Natural killer cell (primary cell): ENCODE measurements at regions of chr3 and their contacts with region 1.

Region 1: GRCh38 chr3:58532794-58533220 is 4.2 kb downstream of the ACOX2 start:
- DNase-seq: peak; percentile 70 to 89
- ATAC-seq: peak; percentile 93 to 99 (median 99)
- H3K4me3 ChIP-seq: no peak overlapping the region
- H3K4me3 Mint-ChIP-seq: no peak overlapping the region
- H3K27ac ChIP-seq: no peak overlapping the region
- H3K27ac Mint-ChIP-seq: peak overlapping the region in 1 of 2 donors; percentile 75
- H3K4me1 ChIP-seq: peaks cover 9% of the 10 kb centered on the region
- H3K4me1 Mint-ChIP-seq: peaks cover 8 to 10% of the 10 kb centered on the region in 2 donors
- H3K27me3 ChIP-seq: no peaks in the 10 kb centered on the region
- H3K27me3 Mint-ChIP-seq: peaks cover 0 to 6% of the 10 kb centered on the region in 2 donors
- CTCF ChIP-seq: peak; percentile 86

Region 2: GRCh38 chr3:58188173-58188564 is 344.6 kb before region 1 on chr3:
- intact Hi-C with region 1: loop called (anchors 5 kb)
- DNase-seq: no peak
- ATAC-seq: no peak
- H3K4me3 ChIP-seq: no peak overlapping the region
- H3K4me3 Mint-ChIP-seq: no peak overlapping the region
- H3K27ac ChIP-seq: no peak overlapping the region
- H3K27ac Mint-ChIP-seq: no peak overlapping the region
- H3K4me1 ChIP-seq: peaks cover 5% of the 10 kb centered on the region
- H3K4me1 Mint-ChIP-seq: no peaks in the 10 kb centered on the region
- H3K27me3 ChIP-seq: no peaks in the 10 kb centered on the region
- H3K27me3 Mint-ChIP-seq: no peaks in the 10 kb centered on the region
- CTCF ChIP-seq: no peak

Region 3: DNA sequence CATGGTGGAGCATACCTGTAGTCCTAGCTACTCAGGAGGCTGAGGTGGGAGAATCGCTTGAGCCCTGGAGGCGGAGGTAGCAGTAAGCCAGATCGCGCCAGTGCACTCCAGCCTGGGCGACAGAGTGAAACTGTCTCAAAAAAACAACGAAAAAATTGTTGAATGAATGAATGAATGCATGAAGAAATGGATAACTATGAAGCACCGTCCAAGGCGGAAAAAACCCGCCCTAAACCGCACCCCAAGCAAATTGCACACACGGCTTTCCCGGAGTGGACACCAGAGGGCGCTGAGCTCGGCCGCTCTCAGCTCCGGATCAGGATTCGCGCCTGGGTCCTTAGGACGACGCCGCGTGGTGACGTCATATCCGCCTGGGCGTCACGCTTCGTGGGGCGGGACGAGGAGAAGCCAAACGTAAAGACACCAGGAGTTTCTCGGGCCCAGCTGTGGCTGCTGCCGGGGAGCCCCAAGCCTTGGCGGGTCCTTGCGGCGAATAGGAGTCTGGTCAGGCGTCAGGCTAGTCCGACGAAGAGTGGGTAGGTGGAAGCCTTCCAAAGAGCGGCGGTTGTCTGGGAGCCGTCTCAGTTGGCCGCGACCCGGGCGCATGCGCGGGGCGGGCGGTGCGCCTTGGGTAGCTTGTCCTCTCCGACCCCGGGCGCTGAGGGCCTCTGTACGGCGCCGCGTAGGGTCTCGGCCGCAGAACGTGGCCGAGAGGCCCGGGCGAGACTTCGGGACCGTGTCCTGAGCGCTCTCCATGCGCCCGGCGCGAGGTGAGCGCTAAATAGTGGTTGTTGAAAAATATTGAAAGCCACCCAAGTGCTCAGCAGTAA is 226.7 kb before region 1 on chr3 and contains the starts of genes HTD2 and RPP14:
- intact Hi-C with region 1: loop called (anchors 1 kb)
- DNase-seq: peak; percentile 99 to 100
- ATAC-seq: peak; percentile 90 to 97 (median 91)
- H3K4me3 ChIP-seq: peak within 1 kb of the TSS; percentile 79
- H3K4me3 Mint-ChIP-seq: peak within 1 kb of the TSS; percentile 100
- H3K27ac ChIP-seq: peak within 1 kb of the TSS; percentile 95
- H3K27ac Mint-ChIP-seq: peak within 1 kb of the TSS; percentile 99
- H3K4me1 ChIP-seq: peaks cover 24% of the 10 kb centered on the region
- H3K4me1 Mint-ChIP-seq: peaks cover 30 to 32% of the 10 kb centered on the region in 2 donors
- H3K27me3 ChIP-seq: no peaks in the 10 kb centered on the region
- H3K27me3 Mint-ChIP-seq: peaks cover 8 to 17% of the 10 kb centered on the region in 2 donors
- CTCF ChIP-seq: peak; percentile 96
- total RNA-seq, gene HTD2: 3.3 to 5.5 (median 3.7) TPM
- total RNA-seq, gene RPP14: 13.1 to 18.8 (median 17.0) TPM

Region 4: DNA sequence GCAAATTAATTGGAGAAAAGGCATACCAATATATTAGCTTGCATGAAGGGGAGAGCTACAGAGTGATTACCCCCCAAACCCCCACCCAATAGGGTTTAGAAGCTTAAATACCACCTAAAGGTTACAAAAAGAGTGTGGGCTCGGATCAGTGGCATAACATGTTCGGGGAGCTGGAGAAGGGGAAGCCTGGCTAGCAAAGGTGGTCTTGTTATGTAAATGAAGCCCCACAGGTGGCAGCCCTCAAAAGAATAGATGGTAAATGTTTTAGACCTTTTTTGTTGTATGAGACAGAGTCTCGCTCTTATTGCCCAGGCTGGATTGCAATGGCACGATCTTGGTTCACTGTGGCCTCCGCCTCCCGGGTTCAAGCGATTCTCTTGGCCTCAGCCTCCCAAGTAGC is 211.0 kb before region 1 on chr3:
- intact Hi-C with region 1: loop called (anchors 1 kb)
- DNase-seq: no peak
- ATAC-seq: no peak
- H3K4me3 ChIP-seq: no peak overlapping the region
- H3K4me3 Mint-ChIP-seq: no peak overlapping the region
- H3K27ac ChIP-seq: no peak overlapping the region
- H3K27ac Mint-ChIP-seq: no peak overlapping the region
- H3K4me1 ChIP-seq: no peaks in the 10 kb centered on the region
- H3K4me1 Mint-ChIP-seq: no peaks in the 10 kb centered on the region
- H3K27me3 ChIP-seq: no peaks in the 10 kb centered on the region
- H3K27me3 Mint-ChIP-seq: no peaks in the 10 kb centered on the region
- CTCF ChIP-seq: no peak

Region 5: GRCh38 chr3:58433400-58434169 is 99.2 kb before region 1 on chr3 and contains the start of gene PDHB:
- intact Hi-C with region 1: loop called (anchors 1 kb)
- DNase-seq: peak; percentile 83 to 93
- ATAC-seq: peak; percentile 94 to 98 (median 95)
- H3K4me3 ChIP-seq: peak within 1 kb of the TSS; percentile 86
- H3K4me3 Mint-ChIP-seq: peak within 1 kb of the TSS; percentile 90
- H3K27ac ChIP-seq: peak within 1 kb of the TSS; percentile 82
- H3K27ac Mint-ChIP-seq: peak within 1 kb of the TSS; percentile 89 to 96
- H3K4me1 ChIP-seq: peaks cover 12% of the 10 kb centered on the region
- H3K4me1 Mint-ChIP-seq: peaks cover 19 to 22% of the 10 kb centered on the region in 2 donors
- H3K27me3 ChIP-seq: no peaks in the 10 kb centered on the region
- H3K27me3 Mint-ChIP-seq: peaks cover 0 to 7% of the 10 kb centered on the region in 2 donors
- CTCF ChIP-seq: no peak
- total RNA-seq, gene PDHB: 33.7 to 52.4 (median 39.9) TPM

Region 6: DNA sequence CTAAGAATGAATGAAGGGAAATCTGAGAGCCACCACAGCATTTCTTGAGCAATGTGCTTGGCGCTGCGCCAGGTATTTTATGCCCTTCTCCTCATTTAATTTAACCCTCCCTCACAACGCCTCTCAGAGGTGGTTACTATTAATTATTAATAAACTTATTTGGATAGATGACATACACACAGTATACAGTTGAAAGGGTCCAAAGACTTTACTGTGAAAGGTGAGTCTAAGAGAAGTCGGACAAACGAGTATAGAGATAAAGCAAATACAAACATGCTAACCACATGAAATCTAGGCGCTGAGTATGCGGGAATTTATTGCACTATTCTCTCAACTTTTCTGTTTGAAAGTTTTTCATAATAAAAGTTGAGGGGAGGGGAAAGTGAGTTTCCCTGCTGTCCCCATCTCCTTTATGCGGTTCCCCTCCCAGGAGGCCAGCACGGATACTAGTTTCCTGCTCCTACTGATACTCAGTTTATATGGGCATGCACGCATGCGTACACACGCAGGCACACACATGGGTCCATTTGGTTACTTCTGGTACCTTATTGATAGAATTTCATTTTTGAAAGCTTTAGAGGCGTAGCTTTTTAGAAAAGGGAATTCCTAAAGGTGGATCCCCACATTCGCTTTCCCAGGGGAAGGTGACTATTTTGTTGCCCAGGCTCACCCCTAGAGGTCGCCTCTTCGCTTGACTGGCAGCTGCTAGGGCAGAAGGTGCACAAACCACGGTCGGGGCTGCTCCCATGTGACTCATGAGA is 69.4 kb before region 1 on chr3:
- intact Hi-C with region 1: loop called (anchors 1 kb)
- DNase-seq: peak; percentile 63 to 79
- ATAC-seq: peak; percentile 93 to 99 (median 98)
- H3K4me3 ChIP-seq: no peak overlapping the region
- H3K4me3 Mint-ChIP-seq: peak overlapping the region; percentile 35
- H3K27ac ChIP-seq: no peak overlapping the region
- H3K27ac Mint-ChIP-seq: peak overlapping the region in 1 of 2 donors; percentile 36
- H3K4me1 ChIP-seq: peaks cover 12% of the 10 kb centered on the region
- H3K4me1 Mint-ChIP-seq: peaks cover 8 to 12% of the 10 kb centered on the region in 2 donors
- H3K27me3 ChIP-seq: no peaks in the 10 kb centered on the region
- H3K27me3 Mint-ChIP-seq: no peaks in the 10 kb centered on the region
- CTCF ChIP-seq: peak; percentile 94

Region 7: GRCh38 chr3:58491506-58492402 is 41.1 kb before region 1 on chr3 and contains the start of gene KCTD6:
- intact Hi-C with region 1: loop called (anchors 1 kb)
- DNase-seq: peak; percentile 91 to 93
- ATAC-seq: peak; percentile 88 to 97 (median 93)
- H3K4me3 ChIP-seq: peak within 1 kb of the TSS; percentile 72
- H3K4me3 Mint-ChIP-seq: peak within 1 kb of the TSS; percentile 94
- H3K27ac ChIP-seq: peak within 1 kb of the TSS; percentile 54
- H3K27ac Mint-ChIP-seq: peak within 1 kb of the TSS; percentile 68 to 87
- H3K4me1 ChIP-seq: peaks cover 25% of the 10 kb centered on the region
- H3K4me1 Mint-ChIP-seq: peaks cover 45 to 57% of the 10 kb centered on the region in 2 donors
- H3K27me3 ChIP-seq: no peaks in the 10 kb centered on the region
- H3K27me3 Mint-ChIP-seq: peaks cover 7 to 10% of the 10 kb centered on the region in 2 donors
- CTCF ChIP-seq: peak; percentile 52
- total RNA-seq, gene KCTD6: 4.5 to 12.9 (median 7.5) TPM